MCF 10A (cell line): ENCODE measurements at regions of chr1 and their contacts with region 1.

Region 1: GRCh38 chr1:150281837-150282653 is at the start of gene CIART:
- DNase-seq: peak; percentile 99
- H3K4me3 Mint-ChIP-seq: peak within 1 kb of the TSS; percentile 83
- H3K27ac Mint-ChIP-seq: peak within 1 kb of the TSS; percentile 94
- H3K4me1 Mint-ChIP-seq: peaks cover 43% of the 10 kb centered on the region
- H3K27me3 Mint-ChIP-seq: no peaks in the 10 kb centered on the region
- CTCF ChIP-seq: no peak
- total RNA-seq, gene CIART: 5.0 and 5.2 TPM in 2 replicates

Region 2: GRCh38 chr1:150268705-150269403 is 13.2 kb before region 1 on chr1 and contains the start of gene APH1A:
- CTCF ChIA-PET with region 1: interaction called, 16 read pairs
- POLR2A ChIA-PET with region 1: interaction called, 239 read pairs
- intact Hi-C with region 1: no loop called
- DNase-seq: peak; percentile 99
- H3K4me3 Mint-ChIP-seq: peak within 1 kb of the TSS; percentile 81
- H3K27ac Mint-ChIP-seq: peak within 1 kb of the TSS; percentile 83
- H3K4me1 Mint-ChIP-seq: peaks cover 32% of the 10 kb centered on the region
- H3K27me3 Mint-ChIP-seq: no peaks in the 10 kb centered on the region
- CTCF ChIP-seq: no peak
- total RNA-seq, gene APH1A: 123 and 154 TPM in 2 replicates

Region 3: DNA sequence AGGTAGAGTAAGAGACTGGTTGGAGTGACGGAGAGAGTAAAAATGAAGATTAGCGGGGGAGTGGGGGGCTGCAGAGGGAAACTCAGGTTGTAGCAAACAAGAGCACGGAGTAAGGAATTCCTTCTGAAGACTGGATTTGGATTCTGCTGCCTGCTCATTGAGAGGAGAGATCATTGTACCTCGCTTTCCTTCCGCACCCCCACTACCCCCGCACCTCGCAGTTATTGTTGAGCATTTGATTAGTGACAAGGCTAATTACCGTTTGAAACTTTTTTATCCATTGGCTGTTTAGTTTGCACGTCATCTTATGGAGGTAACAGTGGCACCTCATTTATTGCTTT is 39.8 kb after region 1 on chr1:
- CTCF ChIA-PET with region 1: interaction called, 5 read pairs
- POLR2A ChIA-PET with region 1: interaction called, 15 read pairs
- intact Hi-C with region 1: no loop called
- DNase-seq: no peak
- H3K4me3 Mint-ChIP-seq: peak overlapping the region; percentile 98
- H3K27ac Mint-ChIP-seq: peak overlapping the region; percentile 95
- H3K4me1 Mint-ChIP-seq: peaks cover 10% of the 10 kb centered on the region
- H3K27me3 Mint-ChIP-seq: no peaks in the 10 kb centered on the region
- CTCF ChIP-seq: no peak